Activated CD4-positive, alpha-beta T cell treated with anti-CD3 and anti-CD28 coated beads for 36 hours (primary cell): ENCODE measurements at regions of chr11 and their contacts with region 1.

Region 1: DNA sequence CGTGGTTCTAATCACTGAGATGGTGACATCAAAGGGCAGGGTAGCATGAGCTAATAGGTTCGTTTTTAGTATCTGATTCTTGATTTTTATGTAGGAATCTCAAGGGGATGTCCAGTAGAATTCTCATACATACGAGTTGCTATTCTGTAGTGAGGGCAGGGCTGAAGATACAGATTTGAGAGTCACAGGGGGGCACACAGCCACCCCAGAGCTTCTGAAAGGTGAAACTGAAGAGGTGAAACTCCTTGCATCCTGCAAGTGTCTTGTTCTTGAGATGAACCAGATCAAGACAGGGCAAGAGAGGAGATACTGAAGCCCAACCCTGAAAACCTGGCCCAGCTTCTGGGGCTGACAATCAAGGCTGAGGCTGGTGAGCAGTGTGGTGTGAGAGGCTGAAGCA is 35.6 kb upstream of the TMEM123 start:
- DNase-seq: no peak
- ATAC-seq: peak; percentile 43
- H3K4me3 Mint-ChIP-seq: no peak overlapping the region
- H3K27ac Mint-ChIP-seq: peak overlapping the region; percentile 76
- H3K4me1 Mint-ChIP-seq: peaks cover 53% of the 10 kb centered on the region
- H3K27me3 Mint-ChIP-seq: no peaks in the 10 kb centered on the region

Region 2: DNA sequence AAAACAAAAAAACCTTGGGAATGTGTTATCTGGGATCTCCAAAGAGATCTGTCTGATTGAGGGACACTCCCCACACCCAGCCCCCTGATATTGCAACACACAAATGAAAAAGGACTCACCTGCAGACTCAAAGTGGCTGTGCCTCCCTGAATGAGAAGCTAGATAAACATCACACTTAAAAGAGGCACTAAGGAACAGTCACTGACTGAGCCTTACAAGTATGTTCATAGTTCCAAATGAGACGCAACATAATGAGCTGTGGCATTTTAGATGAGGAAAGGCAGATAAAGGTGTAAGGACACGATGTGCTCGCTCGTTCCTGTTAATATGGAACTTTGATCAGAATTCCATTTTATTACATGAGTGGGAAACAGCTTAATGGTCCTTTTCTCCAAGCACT is 462.0 kb before region 1 on chr11:
- CTCF ChIA-PET with region 1: no interaction called
- POLR2A ChIA-PET with region 1: no interaction called
- intact Hi-C with region 1: no loop called
- DNase-seq: no peak
- ATAC-seq: no peak
- H3K4me3 Mint-ChIP-seq: no peak overlapping the region
- H3K27ac Mint-ChIP-seq: no peak overlapping the region
- H3K4me1 Mint-ChIP-seq: no peaks in the 10 kb centered on the region
- H3K27me3 Mint-ChIP-seq: peaks cover 21% of the 10 kb centered on the region

Region 3: GRCh38 chr11:102469172-102469821 is 18.9 kb before region 1 on chr11:
- CTCF ChIA-PET with region 1: no interaction called
- POLR2A ChIA-PET with region 1: interaction called, 3 read pairs
- intact Hi-C with region 1: loop called (anchors 1 to 2 kb)
- DNase-seq: no peak
- ATAC-seq: no peak
- H3K4me3 Mint-ChIP-seq: no peak overlapping the region
- H3K27ac Mint-ChIP-seq: peak overlapping the region; percentile 21
- H3K4me1 Mint-ChIP-seq: peaks cover 95% of the 10 kb centered on the region
- H3K27me3 Mint-ChIP-seq: no peaks in the 10 kb centered on the region

Region 4: DNA sequence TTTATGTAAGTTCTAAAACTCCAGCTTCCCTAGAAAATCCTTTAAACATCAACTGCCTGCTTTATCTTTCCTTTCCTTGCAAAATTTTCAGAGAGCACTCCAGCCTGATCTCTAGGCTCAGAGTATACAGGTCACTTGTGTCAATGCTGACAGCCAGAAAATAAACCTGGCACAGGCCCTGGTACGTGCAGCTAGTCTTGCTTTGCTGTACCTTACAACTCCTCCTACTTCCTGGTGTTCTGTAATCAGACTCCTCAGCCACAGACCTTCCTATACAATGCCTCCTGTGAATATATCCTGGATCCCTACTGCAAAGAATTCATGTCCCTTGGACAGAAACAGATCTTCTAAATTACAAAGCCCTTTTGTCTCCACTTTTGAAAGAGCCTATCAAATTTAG is 11.4 kb before region 1 on chr11:
- CTCF ChIA-PET with region 1: interaction called, 8 read pairs
- POLR2A ChIA-PET with region 1: interaction called, 4 read pairs
- intact Hi-C with region 1: loop called in 1 of 2 experiments (anchors 2 kb)
- DNase-seq: peak; percentile 74
- ATAC-seq: peak; percentile 86
- H3K4me3 Mint-ChIP-seq: peak overlapping the region; percentile 1
- H3K27ac Mint-ChIP-seq: peak overlapping the region; percentile 81
- H3K4me1 Mint-ChIP-seq: peaks cover 64% of the 10 kb centered on the region
- H3K27me3 Mint-ChIP-seq: no peaks in the 10 kb centered on the region

Region 5: GRCh38 chr11:102637731-102638130 is 149.5 kb after region 1 on chr11:
- CTCF ChIA-PET with region 1: no interaction called
- POLR2A ChIA-PET with region 1: no interaction called
- intact Hi-C with region 1: no loop called
- DNase-seq: no peak
- ATAC-seq: no peak
- H3K4me3 Mint-ChIP-seq: no peak overlapping the region
- H3K27ac Mint-ChIP-seq: no peak overlapping the region
- H3K4me1 Mint-ChIP-seq: no peaks in the 10 kb centered on the region
- H3K27me3 Mint-ChIP-seq: peaks cover 3% of the 10 kb centered on the region